Calu3 (cell line): ENCODE measurements at regions of chr18 and their contacts with region 1.

Region 1: GRCh38 chr18:58176915-58177717 is 133.1 kb downstream of the NEDD4L start:
- DNase-seq: peak; percentile 63
- H3K4me3 Mint-ChIP-seq: peak overlapping the region; percentile 8
- H3K27ac Mint-ChIP-seq: peak overlapping the region; percentile 51
- H3K4me1 Mint-ChIP-seq: peaks cover 69% of the 10 kb centered on the region
- H3K27me3 Mint-ChIP-seq: no peaks in the 10 kb centered on the region
- CTCF ChIP-seq: no peak

Region 2: GRCh38 chr18:57959278-57959677 is 217.8 kb before region 1 on chr18:
- CTCF ChIA-PET with region 1: no interaction called
- intact Hi-C with region 1: loop called (anchors 5 kb)
- DNase-seq: peak; percentile 72
- H3K4me3 Mint-ChIP-seq: no peak overlapping the region
- H3K27ac Mint-ChIP-seq: no peak overlapping the region
- H3K4me1 Mint-ChIP-seq: peaks cover 31% of the 10 kb centered on the region
- H3K27me3 Mint-ChIP-seq: no peaks in the 10 kb centered on the region
- CTCF ChIP-seq: no peak

Region 3: DNA sequence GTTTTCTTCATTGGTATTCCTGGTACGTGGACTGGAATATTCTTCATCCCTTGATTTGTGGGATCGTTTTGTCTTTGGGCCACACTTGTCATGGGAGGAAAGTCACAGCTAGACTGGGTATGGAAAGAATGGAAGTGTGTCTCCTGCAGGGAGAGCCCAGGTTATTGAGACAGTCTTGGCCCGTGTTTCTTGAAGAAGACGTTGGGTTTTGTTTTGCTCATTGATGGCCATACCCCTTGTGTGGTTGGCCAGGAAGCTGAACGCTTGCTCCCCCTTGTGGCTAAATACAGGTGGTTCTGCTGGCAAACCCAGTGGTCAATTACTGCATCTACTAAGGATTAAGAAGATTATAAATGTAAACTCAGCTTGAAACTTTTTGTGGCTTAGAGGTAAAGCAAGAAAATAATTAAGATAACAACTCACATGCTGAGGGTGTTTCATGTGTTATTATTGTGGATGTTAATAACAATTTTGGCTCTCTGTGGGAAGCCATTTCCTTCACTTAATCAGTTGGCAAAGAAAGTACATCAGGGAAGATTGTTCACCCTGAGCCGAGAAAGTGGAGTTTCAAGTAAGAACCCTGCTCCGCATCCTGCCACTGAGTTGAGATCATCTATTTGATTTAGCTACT is 41.3 kb before region 1 on chr18:
- CTCF ChIA-PET with region 1: interaction called, 6 read pairs
- intact Hi-C with region 1: loop called (anchors 1 kb)
- DNase-seq: peak; percentile 80
- H3K4me3 Mint-ChIP-seq: peak overlapping the region; percentile 43
- H3K27ac Mint-ChIP-seq: peak overlapping the region; percentile 69
- H3K4me1 Mint-ChIP-seq: peaks cover 65% of the 10 kb centered on the region
- H3K27me3 Mint-ChIP-seq: no peaks in the 10 kb centered on the region
- CTCF ChIP-seq: peak; percentile 87

Region 4: DNA sequence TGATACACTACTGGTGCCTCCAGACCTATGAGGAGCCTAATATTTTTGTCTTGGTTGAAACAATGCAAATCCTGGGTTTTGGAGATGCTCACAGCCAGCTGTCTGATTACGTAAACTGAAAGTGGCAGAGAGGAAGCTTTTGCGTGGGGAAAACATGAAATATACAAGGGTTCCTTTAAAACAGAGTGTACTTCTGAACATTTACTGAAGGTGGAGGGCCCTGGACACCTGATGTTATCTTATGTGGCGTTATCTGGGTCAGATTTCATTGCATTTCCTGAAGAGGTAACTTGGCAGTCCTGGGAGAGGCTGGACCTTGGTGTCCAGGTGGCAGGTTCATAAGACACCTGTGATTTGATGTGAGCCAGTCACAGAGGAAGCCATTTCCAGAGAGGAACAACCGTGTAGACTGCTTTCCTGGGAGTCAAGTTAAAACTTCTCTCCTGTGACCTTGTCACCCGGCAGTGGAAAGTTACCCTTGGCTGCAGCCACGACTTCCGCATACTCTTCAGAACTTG is 28.1 kb before region 1 on chr18:
- CTCF ChIA-PET with region 1: interaction called, 10 read pairs
- intact Hi-C with region 1: no loop called
- DNase-seq: no peak
- H3K4me3 Mint-ChIP-seq: no peak overlapping the region
- H3K27ac Mint-ChIP-seq: no peak overlapping the region
- H3K4me1 Mint-ChIP-seq: peaks cover 60% of the 10 kb centered on the region
- H3K27me3 Mint-ChIP-seq: no peaks in the 10 kb centered on the region
- CTCF ChIP-seq: no peak